ENCODE measurements at regions of chr12 and their contacts with region 1.

Region 1: GRCh38 chr12:57462251-57462911 is 2.8 kb downstream of the GLI1 start:
- DNase-seq: peak; percentile 94
- H3K27ac ChIP-seq: peak overlapping the region; percentile 97
- CTCF ChIP-seq: peak; percentile 95

Region 2: DNA sequence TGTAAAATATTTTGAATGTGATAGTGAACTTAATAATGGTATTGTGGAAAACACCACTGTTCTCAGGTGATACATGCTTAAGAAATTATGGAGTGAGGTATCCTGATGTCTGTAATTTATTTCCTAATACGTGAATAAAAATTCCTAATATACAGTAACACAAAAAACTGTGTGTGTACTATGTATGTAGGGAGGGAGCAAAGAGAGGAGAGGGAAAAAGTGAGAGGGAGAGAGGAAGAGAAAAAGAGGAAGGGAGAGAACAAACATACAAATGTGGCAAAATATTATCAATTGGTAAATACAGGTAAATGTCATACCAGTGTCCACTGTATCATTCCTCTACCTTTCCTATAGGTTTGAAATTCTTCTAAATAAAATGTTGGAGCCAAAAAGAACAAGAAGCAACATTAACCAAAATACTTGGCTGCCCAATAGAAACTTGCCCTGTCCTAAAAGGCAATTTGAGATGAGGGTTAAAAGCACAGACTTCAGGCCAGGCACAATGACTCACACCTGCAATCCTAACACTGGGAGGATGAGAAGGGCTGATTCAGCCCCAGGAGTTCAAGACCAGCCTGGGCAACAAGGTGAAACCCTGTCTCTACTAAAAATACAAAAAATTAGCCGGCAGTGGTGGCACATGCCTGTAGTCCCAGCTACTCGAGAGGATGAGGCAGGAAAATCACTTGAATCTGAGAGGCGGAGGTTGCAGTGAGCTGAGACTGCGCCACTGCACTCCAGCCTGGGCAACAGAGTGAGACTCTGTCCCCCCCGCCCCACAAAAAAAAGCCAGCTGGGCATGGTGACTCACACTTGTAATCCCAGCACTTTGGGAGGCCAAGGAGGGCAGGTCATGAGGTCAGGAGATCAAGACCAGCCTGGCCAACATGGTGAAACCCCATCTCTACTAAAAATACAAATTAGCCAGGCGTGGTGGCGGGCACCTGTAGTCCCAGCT is 46.1 kb before region 1 on chr12:
- CTCF ChIA-PET with region 1: no interaction called
- POLR2A ChIA-PET with region 1: no interaction called
- DNase-seq: no peak
- H3K27ac ChIP-seq: peak overlapping the region; percentile 63
- CTCF ChIP-seq: no peak

Region 3: GRCh38 chr12:57475271-57476161 is 13.1 kb after region 1 on chr12:
- CTCF ChIA-PET with region 1: interaction called, 12 read pairs
- POLR2A ChIA-PET with region 1: no interaction called
- DNase-seq: no peak
- H3K27ac ChIP-seq: no peak overlapping the region
- CTCF ChIP-seq: no peak

Region 4: DNA sequence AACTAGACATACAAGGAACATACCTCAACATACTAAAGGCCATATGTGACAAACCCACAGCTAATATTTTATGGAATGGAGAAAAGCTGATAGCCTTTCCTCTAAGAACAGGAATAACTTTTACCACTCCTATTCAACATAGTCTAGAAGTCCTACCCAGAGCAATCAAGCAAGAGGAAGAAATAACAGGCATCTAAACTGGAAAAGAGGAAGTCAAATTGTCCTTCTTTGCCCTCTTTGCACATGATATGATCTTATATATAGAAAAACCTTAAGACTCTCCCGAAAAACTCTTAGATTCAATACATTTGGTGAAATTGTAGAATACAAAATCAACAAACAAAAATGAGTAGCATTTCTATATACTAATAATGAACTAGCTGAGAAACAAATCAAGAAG is 589.0 kb after region 1 on chr12:
- CTCF ChIA-PET with region 1: no interaction called
- POLR2A ChIA-PET with region 1: no interaction called
- DNase-seq: no peak
- H3K27ac ChIP-seq: no peak overlapping the region
- CTCF ChIP-seq: no peak

Measured in RWPE1 (cell line).